Breast epithelium (tissue), 4 donors: ENCODE measurements at regions of chr3 and their contacts with region 1.

Region 1: DNA sequence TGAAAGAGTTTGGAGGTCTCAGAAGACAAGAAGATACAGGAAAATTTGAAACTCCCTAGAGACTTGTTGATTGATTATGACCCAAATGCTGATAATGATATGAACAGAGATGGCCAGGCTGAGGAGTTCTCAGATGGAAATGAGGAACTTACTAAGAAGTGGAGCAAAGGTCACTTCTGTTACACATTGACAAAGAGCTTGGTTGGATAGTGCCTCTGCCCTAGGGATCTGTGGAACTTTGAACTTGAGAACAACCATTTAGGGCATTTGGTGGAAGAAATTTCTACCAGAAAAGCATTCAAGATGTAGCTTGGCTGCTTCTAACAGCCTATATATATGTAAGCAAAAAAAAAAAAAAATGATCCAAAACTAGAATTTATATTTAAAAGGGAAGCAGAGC is 48.9 kb upstream of the NAALADL2 start:
- DNase-seq: no peak
- H3K4me3 ChIP-seq: no peak overlapping the region
- H3K27ac ChIP-seq: no peak overlapping the region
- H3K4me1 ChIP-seq: no peaks in the 10 kb centered on the region
- H3K27me3 ChIP-seq: no peaks in the 10 kb centered on the region
- CTCF ChIP-seq: no peak
- POLR2A ChIP-seq: no peak

Region 2: GRCh38 chr3:174397848-174398247 is 412.4 kb before region 1 on chr3:
- intact Hi-C with region 1: loop called (anchors 5 kb)
- DNase-seq: no peak
- H3K4me3 ChIP-seq: no peak overlapping the region
- H3K27ac ChIP-seq: no peak overlapping the region
- H3K4me1 ChIP-seq: no peaks in the 10 kb centered on the region
- H3K27me3 ChIP-seq: no peaks in the 10 kb centered on the region
- CTCF ChIP-seq: peak; percentile 36 to 66 (median 41)
- POLR2A ChIP-seq: no peak

Region 3: DNA sequence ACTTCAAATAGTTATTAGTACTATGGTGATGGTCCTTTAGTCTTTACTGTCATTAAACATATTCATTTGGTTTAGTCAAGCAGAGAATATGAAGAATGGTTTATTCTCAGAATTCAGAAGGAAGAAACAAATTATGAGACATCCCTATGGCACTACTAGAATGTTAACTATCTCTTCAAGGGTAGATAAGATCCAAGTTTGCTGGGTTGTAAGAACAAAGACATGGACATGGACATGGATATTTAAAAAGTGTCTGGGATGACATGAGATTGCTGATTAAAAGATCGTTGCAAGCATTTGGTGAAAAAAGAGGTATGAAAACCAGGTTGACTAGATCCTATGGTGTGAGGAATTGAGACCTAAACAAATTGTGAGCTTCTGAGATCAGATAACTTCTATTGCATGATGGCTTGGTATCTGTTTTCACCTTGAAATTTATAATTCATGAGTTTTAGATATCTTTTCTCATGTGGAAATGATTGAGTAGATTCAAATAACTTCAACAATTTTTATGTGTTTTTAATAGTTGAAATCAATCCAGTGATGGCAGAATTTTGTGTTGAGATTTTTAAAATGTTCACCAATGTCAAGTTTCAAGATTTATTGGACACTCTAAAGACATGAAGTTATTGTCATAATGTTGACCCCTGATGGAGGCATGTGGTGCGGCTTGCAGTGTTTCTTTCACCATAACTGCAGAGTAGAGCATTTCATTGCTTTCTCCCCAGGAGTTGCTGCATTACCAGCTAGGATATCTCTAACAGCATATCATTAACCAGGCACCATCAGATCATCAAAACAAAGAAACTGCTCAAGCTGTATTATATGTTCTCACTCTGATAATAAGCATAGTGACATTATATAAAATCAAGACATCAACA is 121.5 kb after region 1 on chr3:
- intact Hi-C with region 1: no loop called
- DNase-seq: no peak
- H3K4me3 ChIP-seq: no peak overlapping the region
- H3K27ac ChIP-seq: no peak overlapping the region
- H3K4me1 ChIP-seq: no peaks in the 10 kb centered on the region
- H3K27me3 ChIP-seq: no peaks in the 10 kb centered on the region
- CTCF ChIP-seq: no peak
- POLR2A ChIP-seq: no peak

Region 4: GRCh38 chr3:176219970-176220369 is 1409.7 kb after region 1 on chr3:
- intact Hi-C with region 1: no loop called
- DNase-seq: no peak
- H3K4me3 ChIP-seq: no peak overlapping the region
- H3K27ac ChIP-seq: no peak overlapping the region
- H3K4me1 ChIP-seq: no peaks in the 10 kb centered on the region
- H3K27me3 ChIP-seq: no peaks in the 10 kb centered on the region
- CTCF ChIP-seq: no peak
- POLR2A ChIP-seq: no peak